Activated B cell treated with CpG ODN at 0.5 μM for 24 hours (primary cell): ENCODE measurements at regions of chr4 and their contacts with region 1.

Region 1: DNA sequence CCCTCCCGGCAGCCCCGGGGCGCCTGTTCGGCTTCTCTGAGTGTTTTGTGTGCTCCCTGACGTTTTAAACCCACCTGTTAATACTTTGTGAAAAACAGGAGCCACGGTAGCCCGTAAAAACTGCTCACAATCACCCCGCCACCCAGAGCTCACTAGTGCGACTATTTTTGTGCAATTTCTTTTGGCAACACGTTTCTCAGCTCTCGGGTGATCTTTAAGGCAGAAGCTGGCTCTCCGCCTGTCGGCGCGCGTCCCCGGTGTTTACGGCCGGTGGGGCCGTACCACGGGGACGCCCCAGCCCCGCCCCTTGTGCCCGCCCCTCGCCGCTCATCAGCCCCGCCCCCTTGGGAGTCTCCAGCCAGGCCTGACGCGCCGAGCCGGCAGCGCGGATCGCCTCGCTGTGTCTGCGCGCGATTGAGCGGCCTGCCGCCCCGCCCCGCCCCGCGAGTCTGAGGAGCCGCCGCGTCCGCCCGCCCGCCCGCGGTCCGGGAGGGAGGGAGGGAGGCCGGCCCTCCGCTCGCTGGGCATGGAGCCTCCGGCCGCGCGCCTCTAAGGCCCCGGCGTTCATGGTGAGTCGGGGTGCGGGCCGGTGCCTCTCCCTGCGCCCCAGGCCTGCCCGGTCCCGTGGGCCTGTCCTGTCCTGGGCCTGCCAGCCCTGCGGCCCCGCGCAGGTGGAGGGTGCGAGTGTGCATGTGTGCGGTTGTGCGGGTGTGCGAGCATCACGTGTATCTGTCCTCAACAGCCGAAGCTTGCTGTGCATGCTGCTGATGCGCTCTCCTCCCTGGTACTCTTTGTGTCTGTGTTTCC is 56.2 kb upstream of the TADA2B start:
- DNase-seq: peak; percentile 90
- ATAC-seq: peak; percentile 92
- H3K4me3 Mint-ChIP-seq: peak overlapping the region; percentile 94
- H3K27ac Mint-ChIP-seq: peak overlapping the region; percentile 98
- H3K4me1 Mint-ChIP-seq: peaks cover 74% of the 10 kb centered on the region
- H3K27me3 Mint-ChIP-seq: no peaks in the 10 kb centered on the region
- CTCF ChIP-seq: no peak

Region 2: GRCh38 chr4:6640292-6641163 is 346.5 kb before region 1 on chr4 and contains the start of gene MRFAP1:
- CTCF ChIA-PET with region 1: no interaction called
- POLR2A ChIA-PET with region 1: interaction called, 6 read pairs
- intact Hi-C with region 1: loop called (anchors 2 kb)
- DNase-seq: peak; percentile 91
- ATAC-seq: peak; percentile 84
- H3K4me3 Mint-ChIP-seq: peak within 1 kb of the TSS; percentile 99
- H3K27ac Mint-ChIP-seq: peak within 1 kb of the TSS; percentile 100
- H3K4me1 Mint-ChIP-seq: peaks cover 36% of the 10 kb centered on the region
- H3K27me3 Mint-ChIP-seq: no peaks in the 10 kb centered on the region
- CTCF ChIP-seq: no peak
- total RNA-seq, gene MRFAP1: 93.8 and 93.9 TPM in 2 replicates

Region 3: GRCh38 chr4:6909073-6909965 is 77.7 kb before region 1 on chr4 and contains the start of gene TBC1D14:
- CTCF ChIA-PET with region 1: interaction called, 7 read pairs
- POLR2A ChIA-PET with region 1: interaction called, 56 read pairs
- intact Hi-C with region 1: loop called (anchors 1 kb)
- DNase-seq: peak; percentile 88
- ATAC-seq: peak; percentile 89
- H3K4me3 Mint-ChIP-seq: peak within 1 kb of the TSS; percentile 87
- H3K27ac Mint-ChIP-seq: peak within 1 kb of the TSS; percentile 86
- H3K4me1 Mint-ChIP-seq: peaks cover 43% of the 10 kb centered on the region
- H3K27me3 Mint-ChIP-seq: peaks cover 5% of the 10 kb centered on the region
- CTCF ChIP-seq: no peak
- total RNA-seq, gene TBC1D14: 35.1 and 35.2 TPM in 2 replicates

Region 4: GRCh38 chr4:6942238-6942800 is 44.7 kb before region 1 on chr4:
- CTCF ChIA-PET with region 1: no interaction called
- POLR2A ChIA-PET with region 1: no interaction called
- intact Hi-C with region 1: loop called (anchors 1 kb)
- DNase-seq: no peak
- ATAC-seq: no peak
- H3K4me3 Mint-ChIP-seq: peak overlapping the region; percentile 32
- H3K27ac Mint-ChIP-seq: peak overlapping the region; percentile 73
- H3K4me1 Mint-ChIP-seq: peaks cover 62% of the 10 kb centered on the region
- H3K27me3 Mint-ChIP-seq: no peaks in the 10 kb centered on the region
- CTCF ChIP-seq: no peak

Region 5: DNA sequence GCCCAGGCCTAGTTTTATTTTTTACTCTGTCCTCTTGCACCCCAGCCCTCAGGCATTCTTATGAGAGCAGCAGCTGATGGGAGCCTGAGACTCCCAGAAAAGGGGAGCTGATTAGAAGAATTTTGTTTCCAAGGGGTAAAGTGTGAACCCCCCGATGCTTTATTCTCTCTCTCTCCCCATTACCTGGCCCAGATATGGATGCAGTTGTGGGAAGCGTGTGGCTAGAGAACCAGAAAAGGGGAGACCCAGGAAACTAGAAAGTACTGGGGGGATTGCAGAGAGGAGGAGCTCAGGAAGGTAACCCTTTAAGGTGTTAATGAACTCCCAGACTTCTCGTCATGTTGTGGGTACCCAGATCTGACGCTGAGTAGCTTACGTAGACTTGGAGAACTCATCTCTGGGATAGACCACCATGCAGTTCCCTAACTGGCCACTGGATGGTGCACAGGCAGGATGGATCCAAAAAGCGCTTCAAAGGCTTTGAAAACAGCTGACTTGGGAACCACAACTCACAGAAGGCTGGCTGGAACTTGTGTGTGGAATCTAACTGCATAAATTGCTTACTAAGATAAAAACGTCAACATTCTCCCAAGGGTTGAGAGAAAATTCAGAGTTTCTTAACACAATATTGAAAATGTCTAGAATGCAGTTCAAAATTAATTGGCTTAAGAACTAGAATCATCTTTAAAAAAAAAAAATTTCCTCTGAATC is 12.7 kb before region 1 on chr4:
- CTCF ChIA-PET with region 1: interaction called, 9 read pairs
- POLR2A ChIA-PET with region 1: interaction called, 8 read pairs
- intact Hi-C with region 1: loop called (anchors 1 kb)
- DNase-seq: peak; percentile 66
- ATAC-seq: peak; percentile 95
- H3K4me3 Mint-ChIP-seq: no peak overlapping the region
- H3K27ac Mint-ChIP-seq: no peak overlapping the region
- H3K4me1 Mint-ChIP-seq: peaks cover 32% of the 10 kb centered on the region
- H3K27me3 Mint-ChIP-seq: no peaks in the 10 kb centered on the region
- CTCF ChIP-seq: peak; percentile 39

Region 6: GRCh38 chr4:7042697-7043464 is 55.9 kb after region 1 on chr4 and contains the start of gene TADA2B:
- CTCF ChIA-PET with region 1: no interaction called
- POLR2A ChIA-PET with region 1: interaction called, 22 read pairs
- intact Hi-C with region 1: loop called (anchors 1 kb)
- DNase-seq: peak; percentile 96
- ATAC-seq: peak; percentile 87
- H3K4me3 Mint-ChIP-seq: peak within 1 kb of the TSS; percentile 93
- H3K27ac Mint-ChIP-seq: peak within 1 kb of the TSS; percentile 85
- H3K4me1 Mint-ChIP-seq: peaks cover 54% of the 10 kb centered on the region
- H3K27me3 Mint-ChIP-seq: no peaks in the 10 kb centered on the region
- CTCF ChIP-seq: no peak
- total RNA-seq, gene TADA2B: 26.7 and 31.8 TPM in 2 replicates